CD4-positive, alpha-beta T cell (primary cell): ENCODE measurements at regions of chr2 and their contacts with region 1.

Region 1: DNA sequence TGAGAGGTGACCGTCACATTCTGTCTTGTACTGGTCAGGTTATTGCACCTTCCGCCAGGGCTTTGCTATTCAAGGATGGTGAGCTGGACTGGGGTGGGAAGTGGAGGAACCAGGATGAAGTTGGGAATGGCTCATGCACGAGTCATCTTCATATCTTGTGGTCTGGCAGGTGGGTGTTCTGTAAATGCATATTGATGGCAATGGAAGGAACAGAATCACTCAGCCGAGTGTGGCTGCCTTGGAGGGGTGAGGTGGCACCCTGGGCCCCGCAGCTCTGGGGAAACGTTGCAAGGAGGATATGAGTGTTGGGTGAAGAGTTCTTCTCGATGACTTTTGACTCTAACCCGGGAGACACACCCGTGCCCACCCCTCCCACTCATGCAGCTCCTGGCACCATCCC is 1.2 kb downstream of the NEU2 start:
- DNase-seq: no peak
- ATAC-seq: no peak
- H3K4me3 ChIP-seq: no peak overlapping the region
- H3K4me3 Mint-ChIP-seq: no peak overlapping the region
- H3K27ac ChIP-seq: no peak overlapping the region
- H3K27ac Mint-ChIP-seq: no peak overlapping the region
- H3K4me1 ChIP-seq: no peaks in the 10 kb centered on the region
- H3K4me1 Mint-ChIP-seq: no peaks in the 10 kb centered on the region
- H3K27me3 ChIP-seq: no peaks in the 10 kb centered on the region
- H3K27me3 Mint-ChIP-seq: no peaks in the 10 kb centered on the region
- CTCF ChIP-seq: no peak

Region 2: GRCh38 chr2:232869138-232870017 is 164.3 kb before region 1 on chr2:
- CTCF ChIA-PET with region 1: no interaction called
- POLR2A ChIA-PET with region 1: no interaction called
- intact Hi-C with region 1: loop called in 1 of 2 experiments (anchors 10 kb)
- DNase-seq: no peak
- ATAC-seq: no peak
- H3K4me3 ChIP-seq: no peak overlapping the region
- H3K4me3 Mint-ChIP-seq: no peak overlapping the region
- H3K27ac ChIP-seq: no peak overlapping the region
- H3K27ac Mint-ChIP-seq: no peak overlapping the region
- H3K4me1 ChIP-seq: no peaks in the 10 kb centered on the region
- H3K4me1 Mint-ChIP-seq: no peaks in the 10 kb centered on the region
- H3K27me3 ChIP-seq: peaks cover 5 to 6% of the 10 kb centered on the region in 2 experiments
- H3K27me3 Mint-ChIP-seq: peaks cover 6% of the 10 kb centered on the region
- CTCF ChIP-seq: no peak